ENCODE measurements at regions of chr3 and their contacts with region 1.

Region 1: DNA sequence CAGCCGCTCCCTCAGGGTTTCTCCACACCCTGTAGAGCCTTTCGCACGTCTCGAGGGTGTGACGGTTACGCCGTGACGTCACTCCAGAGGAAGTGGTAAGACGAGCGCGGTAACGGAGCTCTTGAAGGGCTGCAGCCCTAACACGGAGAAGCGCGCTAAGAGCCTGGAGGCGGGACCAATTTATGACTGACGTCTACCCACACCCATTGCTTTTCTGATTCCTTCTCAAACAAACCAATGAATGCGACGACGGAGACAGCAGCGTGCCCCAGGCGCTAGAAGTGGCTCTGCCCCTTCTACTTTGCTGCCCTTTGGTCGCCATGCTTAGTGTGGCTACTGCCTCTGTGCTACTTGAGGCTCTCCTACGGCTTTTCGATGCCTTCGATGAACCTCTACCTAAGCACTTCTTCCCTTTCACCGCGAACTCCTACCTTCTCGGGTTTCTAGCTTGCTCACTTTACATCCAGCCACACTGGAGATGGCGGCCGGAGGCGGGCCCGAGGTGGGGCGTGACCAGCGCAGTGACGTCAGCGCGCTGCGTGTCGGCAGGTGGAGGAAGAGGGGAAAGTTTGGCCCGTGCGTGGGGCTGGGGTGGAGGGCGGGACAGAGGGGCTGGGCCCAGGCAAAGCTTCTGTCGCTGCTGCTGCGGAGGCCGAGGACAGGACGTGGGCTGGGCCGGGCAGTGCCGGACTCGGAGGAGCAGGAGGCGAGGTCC is at the start of gene OXSR1:
- DNase-seq: peak; percentile 100
- H3K4me3 ChIP-seq: peak within 1 kb of the TSS; percentile 73 to 98 (median 93)
- H3K27ac ChIP-seq: peak within 1 kb of the TSS; percentile 92 to 99 (median 98)
- H3K4me1 ChIP-seq: peaks cover 0 to 20% (median 19%) of the 10 kb centered on the region in 4 donors
- H3K27me3 ChIP-seq: no peaks in the 10 kb centered on the region
- CTCF ChIP-seq: no peak
- EP300 ChIP-seq: peak in 2 of 4 donors; percentile 5 to 36
- POLR2A ChIP-seq: peak; percentile 84 to 90
- total RNA-seq, gene OXSR1: 21.8 to 28.8 (median 26.2) TPM

Region 2: DNA sequence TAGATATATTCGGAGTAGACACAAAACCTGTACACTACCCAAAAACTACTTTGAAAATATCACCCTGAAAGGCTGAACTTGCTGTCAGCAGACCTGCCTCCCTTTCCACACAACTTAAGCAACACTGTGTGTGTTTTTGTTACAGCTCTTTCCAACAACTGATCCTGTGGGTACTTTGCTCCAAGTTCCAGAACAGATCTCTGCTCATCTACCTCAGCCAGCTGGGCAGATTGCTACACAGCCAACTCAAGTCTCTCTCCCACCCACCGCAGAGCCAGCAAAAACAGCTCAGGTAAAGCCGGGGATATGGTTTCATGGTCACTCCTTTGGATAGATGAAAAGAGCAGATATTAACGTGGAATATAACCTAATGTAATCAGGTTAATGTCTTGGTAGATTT is 80.8 kb after region 1 on chr3:
- intact Hi-C with region 1: no loop called
- DNase-seq: no peak
- H3K4me3 ChIP-seq: no peak overlapping the region
- H3K27ac ChIP-seq: no peak overlapping the region
- H3K4me1 ChIP-seq: peaks cover 0 to 8% (median 2%) of the 10 kb centered on the region in 4 donors
- H3K27me3 ChIP-seq: no peaks in the 10 kb centered on the region
- CTCF ChIP-seq: no peak
- EP300 ChIP-seq: no peak
- POLR2A ChIP-seq: no peak

Region 3: DNA sequence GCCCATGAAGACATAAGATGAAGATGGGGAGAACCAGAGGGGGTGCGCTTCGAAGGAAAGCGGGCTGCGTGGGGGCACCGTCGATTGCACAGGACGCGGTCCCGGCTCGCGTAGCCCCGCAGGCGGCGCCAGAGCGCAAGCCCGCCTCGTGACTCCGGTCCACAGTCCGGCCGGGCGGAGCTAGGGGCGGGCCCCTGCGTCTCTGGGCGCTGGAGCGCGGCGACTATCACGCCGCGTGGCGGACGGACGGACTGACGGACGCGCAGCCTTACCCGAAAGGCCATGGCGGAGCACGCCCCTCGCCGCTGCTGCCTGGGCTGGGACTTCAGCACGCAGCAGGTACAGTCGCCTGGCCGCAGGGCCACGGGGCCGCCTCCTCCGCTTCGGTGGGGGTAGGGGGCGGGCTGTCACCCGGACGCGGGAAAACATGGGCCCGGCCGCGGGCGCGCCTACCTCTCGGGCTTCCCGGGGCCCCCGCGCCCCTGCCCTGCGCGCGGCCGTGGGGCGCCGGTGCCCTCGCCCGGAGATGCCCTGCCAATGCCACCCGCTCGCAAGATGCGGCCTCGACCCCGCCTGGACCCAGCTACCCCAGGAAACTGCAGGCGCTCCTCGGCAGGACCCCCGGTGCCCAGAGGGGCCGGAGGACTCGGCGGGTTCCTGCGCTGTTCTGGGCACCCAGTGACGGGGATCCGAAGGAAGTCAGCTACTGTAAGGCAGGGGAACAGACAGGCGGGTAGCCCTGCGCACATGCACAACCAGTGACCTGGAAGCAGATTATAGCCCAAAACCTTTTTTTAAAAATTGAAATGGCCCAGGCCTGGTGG is 181.7 kb after region 1 on chr3 and contains the start of gene XYLB:
- intact Hi-C with region 1: loop called (anchors 10 kb)
- DNase-seq: peak; percentile 90
- H3K4me3 ChIP-seq: peak within 1 kb of the TSS; percentile 43 to 80 (median 70)
- H3K27ac ChIP-seq: peak within 1 kb of the TSS; percentile 31 to 72 (median 68)
- H3K4me1 ChIP-seq: peaks cover 0 to 15% (median 13%) of the 10 kb centered on the region in 4 donors
- H3K27me3 ChIP-seq: no peaks in the 10 kb centered on the region
- CTCF ChIP-seq: peak; percentile 80 to 89 (median 86)
- EP300 ChIP-seq: no peak
- POLR2A ChIP-seq: peak in 1 of 2 donors; percentile 18
- total RNA-seq, gene XYLB: 2.3 to 3.2 (median 2.4) TPM

Measured in sigmoid colon (tissue), 7 donors.